Transverse colon (tissue), 4 donors: ENCODE measurements at regions of chr7 and their contacts with region 1.

Region 1: GRCh38 chr7:29564496-29565223 is 1.0 kb downstream of the PRR15 start:
- DNase-seq: peak; percentile 73
- H3K4me3 ChIP-seq: peak overlapping the region; percentile 45 to 71 (median 68)
- H3K27ac ChIP-seq: peak overlapping the region; percentile 89 to 96 (median 92)
- H3K4me1 ChIP-seq: peaks cover 0 to 40% (median 28%) of the 10 kb centered on the region in 4 donors
- H3K27me3 ChIP-seq: peaks cover 64% of the 10 kb centered on the region
- CTCF ChIP-seq: peak in 1 of 5 experiments; percentile 8
- EP300 ChIP-seq: no peak
- POLR2A ChIP-seq: peak; percentile 57

Region 2: DNA sequence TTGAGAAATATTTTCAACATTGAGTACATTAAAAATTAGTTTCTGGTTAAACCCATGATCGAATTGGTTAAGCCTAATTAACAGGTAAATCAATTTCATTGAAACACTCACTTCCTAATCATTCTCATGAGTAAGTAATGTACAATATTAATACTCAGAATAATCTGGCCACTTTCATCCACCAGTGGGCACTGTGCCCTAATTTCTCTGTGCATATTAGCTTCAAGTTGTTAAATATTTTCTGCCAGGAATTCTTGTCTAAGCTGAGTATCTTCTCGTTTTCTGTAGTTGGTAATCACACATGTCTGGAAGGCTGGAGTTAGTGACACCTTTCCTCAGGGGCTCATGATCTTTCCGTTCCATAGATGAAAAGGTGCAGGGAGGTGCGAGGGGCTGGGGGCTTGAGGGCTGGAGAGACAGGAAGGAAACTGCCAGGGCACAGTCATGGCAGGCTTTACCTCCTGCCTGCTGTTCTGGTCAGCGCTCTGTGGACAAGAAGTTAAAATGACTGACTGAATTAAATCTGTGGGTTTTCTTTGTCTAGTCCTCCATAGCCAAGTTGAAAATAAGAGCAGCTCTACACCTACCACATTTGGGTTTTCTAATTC is 313.5 kb after region 1 on chr7:
- in situ Hi-C with region 1: no loop called
- intact Hi-C with region 1: no loop called
- DNase-seq: no peak
- H3K4me3 ChIP-seq: no peak overlapping the region
- H3K27ac ChIP-seq: no peak overlapping the region
- H3K4me1 ChIP-seq: peaks cover 0 to 4% (median 0%) of the 10 kb centered on the region in 4 donors
- H3K27me3 ChIP-seq: no peaks in the 10 kb centered on the region
- CTCF ChIP-seq: peak; percentile 33 to 44 (median 35)
- EP300 ChIP-seq: no peak
- POLR2A ChIP-seq: no peak

Region 3: DNA sequence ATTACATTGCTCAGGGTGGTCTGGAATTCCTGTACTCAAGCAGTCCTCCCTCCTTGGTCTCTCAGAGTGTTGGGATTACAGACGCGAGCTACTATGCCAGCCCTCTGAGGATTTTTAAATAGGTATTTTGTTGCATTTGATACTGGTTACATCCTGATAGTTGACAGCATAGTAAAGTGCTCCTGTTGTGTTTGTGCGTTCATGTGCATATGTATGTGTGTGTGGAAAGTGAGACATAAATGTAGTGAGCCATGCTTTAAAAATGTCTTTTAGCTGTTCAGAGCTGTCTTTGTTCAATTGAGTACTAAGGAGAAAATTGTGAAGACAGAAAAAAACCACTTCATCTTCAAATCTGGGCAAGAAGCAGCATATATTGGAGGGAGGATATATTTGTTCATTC is 747.5 kb after region 1 on chr7:
- in situ Hi-C with region 1: no loop called
- intact Hi-C with region 1: loop called (anchors 5 kb)
- DNase-seq: no peak
- H3K4me3 ChIP-seq: no peak overlapping the region
- H3K27ac ChIP-seq: no peak overlapping the region
- H3K4me1 ChIP-seq: peaks cover 13 to 42% (median 21%) of the 10 kb centered on the region in 4 donors
- H3K27me3 ChIP-seq: no peaks in the 10 kb centered on the region
- CTCF ChIP-seq: no peak
- EP300 ChIP-seq: no peak
- POLR2A ChIP-seq: no peak